HCT116 (cell line): ENCODE measurements at regions of chr4 and their contacts with region 1.

Region 1: GRCh38 chr4:69224891-69225290 is 10.3 kb upstream of the UGT2B11 start:
- DNase-seq: no peak
- ATAC-seq: no peak
- H3K4me3 ChIP-seq: no peak overlapping the region
- H3K27ac ChIP-seq: no peak overlapping the region
- H3K4me1 ChIP-seq: no peaks in the 10 kb centered on the region
- H3K27me3 ChIP-seq: no peaks in the 10 kb centered on the region
- CTCF ChIP-seq: no peak
- POLR2A ChIP-seq: no peak
- RAD21 ChIP-seq: no peak

Region 2: GRCh38 chr4:69383281-69383680 is 158.4 kb after region 1 on chr4:
- CTCF ChIA-PET with region 1: no interaction called
- POLR2A ChIA-PET with region 1: no interaction called
- RAD21 ChIA-PET with region 1: no interaction called
- intact Hi-C with region 1: loop called (anchors 5 kb)
- DNase-seq: no peak
- ATAC-seq: no peak
- H3K4me3 ChIP-seq: no peak overlapping the region
- H3K27ac ChIP-seq: no peak overlapping the region
- H3K4me1 ChIP-seq: no peaks in the 10 kb centered on the region
- H3K27me3 ChIP-seq: no peaks in the 10 kb centered on the region
- CTCF ChIP-seq: no peak
- POLR2A ChIP-seq: no peak
- RAD21 ChIP-seq: no peak